ENCODE measurements at regions of chr1 and their contacts with region 1.

Region 1: GRCh38 chr1:63935143-63935542 is 161.3 kb downstream of the ROR1 start:
- DNase-seq: no peak
- ATAC-seq: no peak
- H3K4me3 ChIP-seq: no peak overlapping the region
- H3K27ac ChIP-seq: peak overlapping the region in 1 of 2 donors; percentile 56
- H3K4me1 ChIP-seq: peaks cover 8 to 25% of the 10 kb centered on the region in 2 donors
- H3K27me3 ChIP-seq: no peaks in the 10 kb centered on the region

Region 2: GRCh38 chr1:63984257-63984929 is 49.2 kb after region 1 on chr1:
- intact Hi-C with region 1: loop called in 1 of 2 experiments (anchors 5 kb)
- DNase-seq: no peak
- ATAC-seq: peak; percentile 15
- H3K4me3 ChIP-seq: no peak overlapping the region
- H3K27ac ChIP-seq: peak overlapping the region; percentile 70 to 76
- H3K4me1 ChIP-seq: peaks cover 12 to 13% of the 10 kb centered on the region in 2 donors
- H3K27me3 ChIP-seq: no peaks in the 10 kb centered on the region

Region 3: DNA sequence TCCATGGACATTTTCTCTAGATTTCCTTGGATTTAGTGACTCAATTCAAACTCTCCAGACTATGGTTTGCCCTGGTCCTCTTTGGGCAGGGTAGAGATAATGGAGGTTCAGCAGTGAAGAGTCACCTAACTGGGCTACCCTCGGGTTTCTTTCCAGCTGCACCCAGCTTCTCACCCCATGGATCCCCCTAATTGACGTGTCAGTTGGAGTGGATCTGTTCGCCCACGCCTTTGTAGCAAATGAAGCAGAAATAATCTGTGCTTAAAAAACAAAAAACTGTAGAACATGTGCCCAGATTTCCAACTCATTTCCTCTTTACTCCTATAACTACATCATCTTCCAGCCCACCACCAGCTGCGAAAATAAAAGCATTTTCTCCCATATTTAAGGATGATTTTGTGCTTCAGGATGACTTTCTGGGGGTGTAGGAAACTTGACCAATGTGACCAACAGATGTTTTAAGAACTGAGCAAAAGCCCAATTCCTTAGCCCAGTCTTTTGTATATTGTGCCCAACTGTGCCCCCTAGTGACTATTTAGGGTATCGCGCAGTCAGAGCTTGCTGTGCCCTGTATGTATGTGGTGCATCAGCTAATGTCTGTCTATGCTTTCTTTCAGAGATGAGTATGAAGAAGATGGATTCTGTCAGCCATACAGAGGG is 201.7 kb after region 1 on chr1:
- intact Hi-C with region 1: loop called in 1 of 2 experiments (anchors 10 kb)
- DNase-seq: peak; percentile 73 to 86
- ATAC-seq: peak; percentile 93
- H3K4me3 ChIP-seq: no peak overlapping the region
- H3K27ac ChIP-seq: no peak overlapping the region
- H3K4me1 ChIP-seq: peaks cover 0 to 4% of the 10 kb centered on the region in 2 donors
- H3K27me3 ChIP-seq: no peaks in the 10 kb centered on the region

Measured in aorta (tissue), 5 donors.